BJ (cell line): ENCODE measurements at regions of chr7 and their contacts with region 1.

Region 1: DNA sequence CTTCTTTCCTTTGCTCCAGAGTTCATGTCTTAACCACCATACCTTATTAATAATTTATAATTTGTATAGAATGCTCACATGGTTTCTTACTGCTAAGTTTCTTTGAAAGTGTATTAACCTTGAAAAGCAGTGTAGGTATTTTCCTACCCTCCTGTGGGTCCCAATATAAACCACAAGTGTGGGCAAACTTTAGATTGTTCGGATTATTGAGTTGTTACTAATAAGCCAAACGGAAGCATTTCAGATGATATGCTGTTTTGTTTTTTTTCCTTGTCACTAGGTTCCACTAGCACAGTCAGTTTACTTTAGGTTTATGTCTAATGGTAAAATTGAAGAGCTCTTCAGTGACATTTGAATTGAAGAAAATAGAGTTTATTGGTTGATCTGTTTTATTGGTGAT is 10.2 kb downstream of the SSBP1 start:
- DNase-seq: no peak
- H3K4me3 ChIP-seq: no peak overlapping the region
- H3K27me3 ChIP-seq: no peaks in the 10 kb centered on the region
- CTCF ChIP-seq: no peak

Region 2: GRCh38 chr7:141737834-141738591 is 10.4 kb before region 1 on chr7 and contains the start of gene SSBP1:
- CTCF ChIA-PET with region 1: interaction called, 17 read pairs
- POLR2A ChIA-PET with region 1: no interaction called
- DNase-seq: peak; percentile 82
- H3K4me3 ChIP-seq: peak within 1 kb of the TSS; percentile 88
- H3K27me3 ChIP-seq: no peaks in the 10 kb centered on the region
- CTCF ChIP-seq: peak; percentile 84
- polyA plus RNA-seq, gene SSBP1: 55.0 and 139 TPM in 2 replicates

Region 3: GRCh38 chr7:141763797-141764196 is 15.4 kb after region 1 on chr7 and contains the start of gene TAS2R3:
- CTCF ChIA-PET with region 1: no interaction called
- POLR2A ChIA-PET with region 1: no interaction called
- DNase-seq: no peak
- H3K4me3 ChIP-seq: no peak within 1 kb of the TSS
- H3K27me3 ChIP-seq: no peaks in the 10 kb centered on the region
- CTCF ChIP-seq: no peak
- polyA plus RNA-seq, gene TAS2R3: 0.29 TPM in 1 of 2 replicates, not detected in the other